Mammary epithelial cell (primary cell): ENCODE measurements at regions of chr11 and their contacts with region 1.

Region 1: DNA sequence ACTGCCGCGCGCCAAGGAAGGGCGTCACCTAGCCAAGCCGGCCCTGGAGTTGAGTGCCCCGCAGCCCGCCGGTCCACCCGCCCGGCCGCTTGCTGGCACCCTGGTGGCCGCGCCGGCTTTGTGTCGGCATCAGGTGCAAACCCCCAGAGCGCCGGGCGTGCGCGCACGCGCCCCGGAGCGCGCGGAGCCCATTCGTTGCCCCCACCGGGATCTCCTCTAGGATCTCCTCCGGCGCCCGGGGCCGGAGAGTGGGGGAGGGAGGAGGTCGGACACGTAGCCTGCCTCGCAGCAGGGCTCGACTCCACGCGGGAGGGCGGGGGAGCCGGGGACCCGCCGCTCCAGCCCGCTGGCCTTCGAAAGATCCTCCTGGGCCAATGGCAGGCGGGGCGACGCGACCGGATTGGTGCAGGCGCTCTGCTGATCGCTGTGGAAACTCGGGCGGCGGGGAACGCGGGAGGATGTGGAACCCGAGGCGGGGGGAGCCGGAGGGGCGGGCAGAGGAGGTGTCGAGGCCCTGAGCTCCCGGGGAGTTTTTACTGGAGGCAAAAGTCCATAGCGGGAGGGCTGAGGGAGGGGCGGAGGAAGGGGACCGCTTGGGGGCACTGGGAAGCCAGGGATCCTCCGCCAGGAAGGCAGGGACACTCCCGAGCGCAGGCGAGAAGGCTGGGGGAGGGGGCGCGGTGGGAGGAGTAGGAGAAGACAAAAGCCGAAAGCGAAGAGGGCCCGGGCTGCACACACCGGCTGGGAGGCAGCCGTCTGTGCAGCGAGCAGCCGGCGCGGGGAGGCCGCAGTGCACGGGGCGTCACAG is at the start of gene FADS2:
- DNase-seq: peak; percentile 60
- H3K4me3 ChIP-seq: peak within 1 kb of the TSS; percentile 50 to 74 (median 58)
- H3K27ac ChIP-seq: no peak within 1 kb of the TSS
- H3K4me1 ChIP-seq: peaks cover 11% of the 10 kb centered on the region
- H3K27me3 ChIP-seq: no peaks in the 10 kb centered on the region
- CTCF ChIP-seq: no peak
- total RNA-seq, gene FADS2: 70.7 to 222 TPM

Region 2: DNA sequence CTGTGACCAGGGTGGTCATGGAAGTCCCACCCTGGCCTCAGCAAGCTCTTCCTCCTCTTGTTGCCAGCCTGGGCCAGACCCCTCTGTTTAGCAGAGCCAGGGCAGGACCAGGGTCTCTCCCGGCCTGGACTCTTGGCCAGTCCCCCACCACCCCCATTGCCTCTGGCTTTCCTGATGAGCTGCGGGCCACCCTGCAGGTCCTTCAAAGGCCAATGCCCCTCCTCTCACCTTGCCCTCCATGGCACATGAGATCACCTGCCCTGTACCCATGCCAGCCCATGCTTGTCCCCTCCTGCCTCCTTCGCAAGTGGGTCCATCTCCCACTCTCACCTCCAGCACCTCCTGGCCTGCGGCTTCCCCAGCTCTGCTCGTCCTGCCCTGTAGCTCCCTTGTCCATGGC is 10.7 kb after region 1 on chr11:
- CTCF ChIA-PET with region 1: interaction called, 11 read pairs
- dilution Hi-C with region 1: no loop called
- in situ Hi-C with region 1: no loop called
- intact Hi-C with region 1: no loop called
- DNase-seq: no peak
- H3K4me3 ChIP-seq: no peak overlapping the region
- H3K27ac ChIP-seq: no peak overlapping the region
- H3K4me1 ChIP-seq: no peaks in the 10 kb centered on the region
- H3K27me3 ChIP-seq: no peaks in the 10 kb centered on the region
- CTCF ChIP-seq: no peak